Endothelial cell of umbilical vein (primary cell): ENCODE measurements at regions of chr19 and their contacts with region 1.

Region 1: DNA sequence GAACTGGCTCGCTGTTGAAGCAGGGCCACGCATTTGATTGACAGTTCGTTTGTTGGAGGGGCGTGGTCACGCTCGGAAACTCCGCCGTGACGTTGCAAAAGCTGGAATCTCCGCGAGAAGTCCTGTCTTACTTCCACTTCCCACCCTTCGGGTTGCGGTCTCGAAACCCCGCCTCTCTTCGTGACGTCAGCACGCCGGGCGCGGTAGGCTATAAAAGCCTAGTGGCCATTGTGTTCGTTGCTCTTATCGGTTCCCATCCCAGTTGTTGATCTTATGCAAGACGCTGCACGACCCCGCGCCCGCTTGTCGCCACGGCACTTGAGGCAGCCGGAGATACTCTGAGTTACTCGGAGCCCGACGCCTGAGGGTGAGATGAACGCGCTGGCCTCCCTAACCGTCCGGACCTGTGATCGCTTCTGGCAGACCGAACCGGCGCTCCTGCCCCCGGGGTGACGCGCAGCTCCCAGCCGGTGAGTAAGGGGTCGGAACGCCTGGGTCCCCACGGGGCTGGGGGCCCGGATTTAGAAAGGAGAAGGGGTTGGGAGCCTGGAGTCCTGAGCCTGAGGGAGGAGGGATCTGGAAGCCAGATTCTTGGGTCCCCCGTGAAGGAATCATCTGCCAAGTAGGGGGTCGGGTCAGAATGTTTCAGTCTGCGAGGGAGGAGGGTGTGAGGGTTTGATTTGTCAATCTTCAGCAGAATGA is at the start of gene PPP1R15A:
- DNase-seq: peak; percentile 100
- H3K4me3 ChIP-seq: peak within 1 kb of the TSS; percentile 93 to 100 (median 100)
- H3K27ac ChIP-seq: peak within 1 kb of the TSS; percentile 100
- H3K4me1 ChIP-seq: peaks cover 29% of the 10 kb centered on the region
- H3K27me3 ChIP-seq: no peaks in the 10 kb centered on the region
- CTCF ChIP-seq: no peak
- POLR2A ChIP-seq: peak; percentile 100
- total RNA-seq, gene PPP1R15A: 67.4 and 73.4 TPM in 2 replicates

Region 2: GRCh38 chr19:48812094-48812929 is 60.0 kb before region 1 on chr19:
- CTCF ChIA-PET with region 1: no interaction called
- POLR2A ChIA-PET with region 1: no interaction called
- dilution Hi-C with region 1: no loop called
- intact Hi-C with region 1: loop called (anchors 2 kb)
- DNase-seq: peak; percentile 72
- H3K4me3 ChIP-seq: peak overlapping the region; percentile 12 to 29 (median 20)
- H3K27ac ChIP-seq: no peak overlapping the region
- H3K4me1 ChIP-seq: peaks cover 13% of the 10 kb centered on the region
- H3K27me3 ChIP-seq: no peaks in the 10 kb centered on the region
- CTCF ChIP-seq: no peak
- POLR2A ChIP-seq: peak; percentile 49

Region 3: DNA sequence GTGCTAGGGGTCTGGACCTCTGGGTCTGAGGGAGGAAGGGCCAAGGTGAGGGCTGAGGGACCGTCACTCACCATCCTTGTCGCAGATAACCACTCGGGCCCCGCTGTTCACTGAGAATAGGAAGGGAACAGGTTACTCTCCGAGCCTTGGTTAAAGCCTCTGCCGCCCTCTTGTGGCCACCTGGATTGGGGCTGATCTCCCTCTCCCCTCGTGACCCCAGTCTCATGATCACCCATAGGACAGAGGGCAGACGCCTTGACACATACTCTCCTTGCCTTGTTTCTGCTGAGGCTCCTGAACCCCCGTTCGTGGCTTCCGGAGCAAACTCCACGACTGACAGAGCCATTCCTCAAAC is 36.6 kb before region 1 on chr19:
- CTCF ChIA-PET with region 1: interaction called, 3 read pairs
- POLR2A ChIA-PET with region 1: interaction called, 9 read pairs
- dilution Hi-C with region 1: no loop called
- intact Hi-C with region 1: loop called (anchors 1 kb)
- DNase-seq: peak; percentile 87
- H3K4me3 ChIP-seq: peak overlapping the region; percentile 38 to 61 (median 57)
- H3K27ac ChIP-seq: peak overlapping the region; percentile 52
- H3K4me1 ChIP-seq: peaks cover 5% of the 10 kb centered on the region
- H3K27me3 ChIP-seq: no peaks in the 10 kb centered on the region
- CTCF ChIP-seq: peak; percentile 88 to 92
- POLR2A ChIP-seq: no peak

Region 4: DNA sequence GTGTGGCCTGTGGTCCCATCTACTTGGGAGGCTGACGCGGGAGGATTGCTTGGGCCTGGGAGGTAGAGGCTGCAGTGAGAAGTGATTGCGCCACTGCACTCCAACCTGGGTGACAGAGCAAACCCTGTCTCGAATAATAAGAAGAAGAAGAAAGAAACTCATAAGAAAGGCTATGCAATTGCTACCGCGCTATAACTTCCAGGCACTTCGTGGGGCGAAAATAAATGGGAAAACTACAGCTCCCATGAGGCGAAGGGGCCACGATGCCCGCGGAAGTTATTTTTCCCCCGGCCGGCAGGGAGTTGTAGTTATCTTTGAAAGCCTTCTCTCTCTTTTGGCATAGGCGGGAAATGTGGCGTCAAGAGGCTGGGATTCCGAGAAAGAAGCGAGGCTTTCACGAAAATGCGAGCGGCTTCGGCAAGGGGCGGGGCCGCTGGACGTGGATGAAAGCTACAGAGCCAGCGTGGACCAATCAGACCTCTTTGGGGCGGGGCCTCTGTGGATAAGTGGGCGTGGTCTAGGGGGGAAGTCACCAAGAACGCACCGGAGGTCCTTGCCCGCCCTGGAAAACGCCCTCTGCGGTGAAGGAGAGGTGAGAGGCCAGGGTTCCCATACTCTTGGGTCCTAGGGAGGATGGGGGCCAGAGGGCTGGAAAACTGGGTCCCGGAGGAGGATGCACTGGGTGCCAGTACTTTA is 27.6 kb after region 1 on chr19 and contains the start of gene NUCB1:
- CTCF ChIA-PET with region 1: interaction called, 6 read pairs
- POLR2A ChIA-PET with region 1: interaction called, 13 read pairs
- dilution Hi-C with region 1: no loop called
- intact Hi-C with region 1: loop called (anchors 2 kb)
- DNase-seq: peak; percentile 99
- H3K4me3 ChIP-seq: peak within 1 kb of the TSS; percentile 62 to 84 (median 67)
- H3K27ac ChIP-seq: peak within 1 kb of the TSS; percentile 49
- H3K4me1 ChIP-seq: peaks cover 12% of the 10 kb centered on the region
- H3K27me3 ChIP-seq: peaks cover 2 to 7% of the 10 kb centered on the region in 2 experiments
- CTCF ChIP-seq: peak in 1 of 2 donors; percentile 33
- POLR2A ChIP-seq: peak; percentile 30
- total RNA-seq, gene NUCB1: 190 and 194 TPM in 2 replicates